Left ventricle myocardium superior (tissue), 1 donor: ENCODE measurements at regions of chr4 and their contacts with region 1.

Region 1: DNA sequence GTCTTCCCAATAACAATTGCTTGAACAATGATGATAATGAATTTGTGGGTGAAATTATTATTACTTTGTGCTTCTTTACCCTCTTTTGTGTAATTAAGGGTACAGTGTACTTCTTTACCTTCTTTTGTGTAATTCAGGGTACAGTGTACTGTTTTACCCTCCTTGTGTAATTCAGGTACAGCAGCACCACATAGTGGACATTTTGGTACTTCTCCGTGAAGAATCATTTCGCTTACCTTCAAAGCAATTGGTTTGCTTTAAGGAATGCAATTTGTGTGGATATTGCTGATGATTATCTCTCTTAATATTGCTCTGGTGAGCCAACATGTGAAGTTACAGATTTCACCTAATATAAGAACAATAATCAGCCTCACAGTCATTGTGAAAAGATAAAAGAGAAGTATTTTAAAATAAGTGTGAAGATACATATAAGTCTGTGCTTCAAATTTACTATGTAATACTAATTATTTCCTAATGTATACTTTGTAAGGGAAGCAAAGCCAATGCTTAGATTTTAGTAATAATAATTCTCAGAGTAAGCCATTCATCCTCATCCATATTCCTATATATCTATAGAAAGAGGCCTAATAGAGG is 27.2 kb upstream of the SEC24B start:
- DNase-seq: no peak
- ATAC-seq: peak; percentile 61

Region 2: DNA sequence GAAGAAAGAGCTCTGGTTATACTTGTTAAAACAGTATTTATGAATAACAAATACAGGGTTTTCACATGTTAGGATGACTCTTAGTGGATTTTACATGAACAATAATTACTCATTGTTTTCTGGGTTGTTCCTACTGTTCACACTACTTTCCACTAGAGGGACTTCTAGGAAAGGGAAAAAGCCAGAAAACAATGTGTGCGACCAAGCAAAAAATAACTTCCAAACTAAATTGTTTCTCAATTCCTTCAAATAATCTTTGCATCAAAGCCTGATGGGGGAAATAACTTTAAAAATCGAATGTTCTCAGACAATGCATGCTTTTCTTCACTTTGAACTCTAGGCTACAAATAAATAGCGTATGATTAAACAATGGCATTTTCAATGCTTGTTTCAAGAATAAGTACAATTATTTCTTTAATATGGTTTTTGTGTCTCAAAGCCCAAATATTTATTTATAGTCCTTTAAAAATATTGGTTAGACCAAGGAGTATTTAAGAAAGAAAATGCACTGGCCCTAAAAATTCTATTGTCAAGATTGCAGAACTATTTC is 571.5 kb before region 1 on chr4:
- intact Hi-C with region 1: loop called (anchors 5 kb)
- DNase-seq: no peak
- ATAC-seq: no peak

Region 3: GRCh38 chr4:109350125-109350524 is 56.3 kb before region 1 on chr4:
- intact Hi-C with region 1: no loop called
- DNase-seq: no peak
- ATAC-seq: no peak

Region 4: DNA sequence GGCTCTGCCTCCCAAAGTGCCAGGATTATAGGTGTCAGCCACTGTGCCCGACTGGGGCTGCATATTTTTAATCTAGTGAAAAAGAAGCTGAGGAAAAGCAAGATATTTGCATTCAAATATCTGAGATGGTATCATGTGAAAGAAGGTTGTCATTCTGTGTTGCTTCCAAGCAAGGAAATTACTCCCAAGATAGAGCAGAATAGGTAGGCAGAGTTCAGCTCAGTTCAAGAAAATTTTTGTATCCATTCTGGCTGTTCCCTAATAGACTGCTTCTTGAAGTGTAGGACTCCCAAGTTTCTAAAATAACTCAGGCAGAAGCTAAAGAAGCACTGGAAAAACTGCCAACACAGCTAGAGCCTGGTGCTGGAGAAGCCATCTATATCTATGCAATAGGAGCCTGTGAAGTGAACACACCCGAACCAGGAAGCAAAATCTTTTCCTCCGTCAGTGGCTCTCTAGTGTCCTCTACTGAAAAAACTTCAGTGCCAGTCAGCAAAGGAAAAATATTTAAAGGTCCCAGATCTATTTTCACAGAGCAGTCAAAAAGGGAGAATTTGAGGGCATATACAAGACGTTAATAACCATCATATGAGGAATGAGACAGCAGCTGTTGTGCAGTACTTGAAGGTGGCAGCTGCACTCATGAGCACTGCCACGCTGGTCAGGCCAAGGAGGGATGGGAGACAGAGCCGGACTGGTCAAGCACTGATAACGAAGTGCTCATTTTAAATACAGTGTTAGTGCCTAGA is 167.8 kb after region 1 on chr4:
- intact Hi-C with region 1: no loop called
- DNase-seq: no peak
- ATAC-seq: peak; percentile 55